CD8-positive, alpha-beta T cell (primary cell): ENCODE measurements at regions of chr10 and their contacts with region 1.

Region 1: GRCh38 chr10:70478191-70479164 is at the start of gene PALD1:
- DNase-seq: peak in 3 of 9 experiments; percentile 30 to 56 (median 45)
- ATAC-seq: peak; percentile 19
- H3K4me3 ChIP-seq: peak within 1 kb of the TSS; percentile 47 to 48
- H3K4me3 Mint-ChIP-seq: peak within 1 kb of the TSS; percentile 80
- H3K27ac ChIP-seq: no peak within 1 kb of the TSS
- H3K27ac Mint-ChIP-seq: no peak within 1 kb of the TSS
- H3K4me1 ChIP-seq: peaks cover 43% of the 10 kb centered on the region
- H3K4me1 Mint-ChIP-seq: peaks cover 45% of the 10 kb centered on the region
- H3K27me3 ChIP-seq: no peaks in the 10 kb centered on the region
- H3K27me3 Mint-ChIP-seq: peaks cover 2% of the 10 kb centered on the region
- CTCF ChIP-seq: no peak
- total RNA-seq, gene PALD1: 0.08 TPM in 1 of 2 experiments, not detected in the other

Region 2: GRCh38 chr10:70233109-70233938 is 245.2 kb before region 1 on chr10 and contains the start of gene PPA1:
- CTCF ChIA-PET with region 1: no interaction called
- POLR2A ChIA-PET with region 1: no interaction called
- intact Hi-C with region 1: loop called (anchors 2 kb)
- DNase-seq: peak; percentile 98 to 100 (median 99)
- ATAC-seq: peak; percentile 93
- H3K4me3 ChIP-seq: peak within 1 kb of the TSS; percentile 87 to 90
- H3K4me3 Mint-ChIP-seq: peak within 1 kb of the TSS; percentile 89
- H3K27ac ChIP-seq: peak within 1 kb of the TSS; percentile 74 to 80
- H3K27ac Mint-ChIP-seq: peak within 1 kb of the TSS; percentile 93
- H3K4me1 ChIP-seq: peaks cover 9% of the 10 kb centered on the region
- H3K4me1 Mint-ChIP-seq: peaks cover 36% of the 10 kb centered on the region
- H3K27me3 ChIP-seq: no peaks in the 10 kb centered on the region
- H3K27me3 Mint-ChIP-seq: peaks cover 4% of the 10 kb centered on the region
- CTCF ChIP-seq: no peak
- total RNA-seq, gene PPA1: 79.9 to 83.1 TPM

Region 3: GRCh38 chr10:70320751-70321150 is 157.7 kb before region 1 on chr10:
- CTCF ChIA-PET with region 1: no interaction called
- POLR2A ChIA-PET with region 1: no interaction called
- intact Hi-C with region 1: no loop called
- DNase-seq: no peak
- ATAC-seq: no peak
- H3K4me3 ChIP-seq: no peak overlapping the region
- H3K4me3 Mint-ChIP-seq: no peak overlapping the region
- H3K27ac ChIP-seq: no peak overlapping the region
- H3K27ac Mint-ChIP-seq: no peak overlapping the region
- H3K4me1 ChIP-seq: peaks cover 39% of the 10 kb centered on the region
- H3K4me1 Mint-ChIP-seq: peaks cover 38% of the 10 kb centered on the region
- H3K27me3 ChIP-seq: no peaks in the 10 kb centered on the region
- H3K27me3 Mint-ChIP-seq: no peaks in the 10 kb centered on the region
- CTCF ChIP-seq: no peak

Region 4: GRCh38 chr10:70381471-70382421 is 96.7 kb before region 1 on chr10:
- CTCF ChIA-PET with region 1: no interaction called
- POLR2A ChIA-PET with region 1: interaction called, 3 read pairs
- intact Hi-C with region 1: loop called in 1 of 2 experiments (anchors 5 kb)
- DNase-seq: peak in 4 of 9 experiments; percentile 20 to 57 (median 30)
- ATAC-seq: peak; percentile 37
- H3K4me3 ChIP-seq: peak overlapping the region; percentile 79 to 86
- H3K4me3 Mint-ChIP-seq: peak overlapping the region; percentile 87
- H3K27ac ChIP-seq: no peak overlapping the region
- H3K27ac Mint-ChIP-seq: no peak overlapping the region
- H3K4me1 ChIP-seq: peaks cover 8% of the 10 kb centered on the region
- H3K4me1 Mint-ChIP-seq: peaks cover 10% of the 10 kb centered on the region
- H3K27me3 ChIP-seq: no peaks in the 10 kb centered on the region
- H3K27me3 Mint-ChIP-seq: peaks cover 2% of the 10 kb centered on the region
- CTCF ChIP-seq: no peak

Region 5: GRCh38 chr10:70461215-70461986 is 17.1 kb before region 1 on chr10:
- CTCF ChIA-PET with region 1: interaction called, 14 read pairs
- POLR2A ChIA-PET with region 1: interaction called, 3 read pairs
- intact Hi-C with region 1: no loop called
- DNase-seq: peak in 8 of 9 experiments; percentile 30 to 67 (median 47)
- ATAC-seq: peak; percentile 70
- H3K4me3 ChIP-seq: no peak overlapping the region
- H3K4me3 Mint-ChIP-seq: no peak overlapping the region
- H3K27ac ChIP-seq: no peak overlapping the region
- H3K27ac Mint-ChIP-seq: no peak overlapping the region
- H3K4me1 ChIP-seq: peaks cover 11% of the 10 kb centered on the region
- H3K4me1 Mint-ChIP-seq: peaks cover 4% of the 10 kb centered on the region
- H3K27me3 ChIP-seq: peaks cover 3 to 15% of the 10 kb centered on the region in 2 experiments
- H3K27me3 Mint-ChIP-seq: peaks cover 37% of the 10 kb centered on the region
- CTCF ChIP-seq: peak; percentile 76

Region 6: GRCh38 chr10:70575874-70576802 is 97.7 kb after region 1 on chr10:
- CTCF ChIA-PET with region 1: no interaction called
- POLR2A ChIA-PET with region 1: no interaction called
- intact Hi-C with region 1: loop called in 1 of 2 experiments (anchors 1 kb)
- DNase-seq: peak in 3 of 9 experiments; percentile 48 to 79 (median 71)
- ATAC-seq: peak; percentile 6
- H3K4me3 ChIP-seq: peak overlapping the region in 1 of 2 experiments; percentile 19
- H3K4me3 Mint-ChIP-seq: peak overlapping the region; percentile 37
- H3K27ac ChIP-seq: peak overlapping the region in 1 of 2 experiments; percentile 54
- H3K27ac Mint-ChIP-seq: peak overlapping the region; percentile 84
- H3K4me1 ChIP-seq: peaks cover 45% of the 10 kb centered on the region
- H3K4me1 Mint-ChIP-seq: peaks cover 46% of the 10 kb centered on the region
- H3K27me3 ChIP-seq: no peaks in the 10 kb centered on the region
- H3K27me3 Mint-ChIP-seq: no peaks in the 10 kb centered on the region
- CTCF ChIP-seq: no peak

Region 7: DNA sequence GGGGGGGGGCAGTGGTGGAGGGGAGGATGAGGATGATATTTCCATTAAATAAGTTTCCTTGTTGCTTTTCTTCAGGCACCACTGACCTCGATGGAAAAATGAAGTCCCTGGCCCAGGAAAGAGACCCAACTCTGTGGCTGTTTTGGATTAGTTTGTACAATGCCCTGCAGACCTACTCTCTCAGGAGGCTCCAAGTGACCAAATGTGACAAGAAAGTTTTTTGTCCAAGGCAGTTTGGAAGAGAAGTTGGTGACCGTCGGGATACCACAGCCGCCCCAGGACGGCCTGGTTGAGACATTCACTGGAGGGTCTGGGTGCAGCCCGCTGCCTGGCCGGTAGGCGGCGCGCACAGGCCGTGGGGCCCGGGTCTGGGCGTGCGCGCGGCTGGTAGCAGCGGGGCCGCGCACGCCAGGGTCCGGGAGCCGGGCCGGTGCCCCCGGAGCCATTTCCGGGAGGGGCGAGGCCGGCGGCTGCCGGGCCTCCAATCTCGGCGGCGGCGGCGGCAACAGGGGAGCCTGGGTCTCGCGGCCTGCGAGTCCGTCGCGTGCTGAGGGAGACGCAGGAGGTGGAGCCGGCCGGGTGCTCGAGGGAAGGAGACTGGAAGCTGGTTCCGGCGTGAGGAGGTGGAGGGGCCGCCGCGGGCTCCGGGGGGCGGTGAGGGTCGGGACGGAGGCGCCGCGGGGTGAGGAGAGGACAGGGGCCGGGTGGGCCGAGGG is 337.2 kb after region 1 on chr10 and contains the start of gene SGPL1:
- CTCF ChIA-PET with region 1: no interaction called
- POLR2A ChIA-PET with region 1: no interaction called
- intact Hi-C with region 1: loop called in 1 of 2 experiments (anchors 5 kb)
- DNase-seq: peak; percentile 70 to 93 (median 85)
- ATAC-seq: peak; percentile 94
- H3K4me3 ChIP-seq: peak within 1 kb of the TSS; percentile 48 to 75
- H3K4me3 Mint-ChIP-seq: peak within 1 kb of the TSS; percentile 93
- H3K27ac ChIP-seq: peak within 1 kb of the TSS; percentile 26 to 65
- H3K27ac Mint-ChIP-seq: peak within 1 kb of the TSS; percentile 94
- H3K4me1 ChIP-seq: peaks cover 19% of the 10 kb centered on the region
- H3K4me1 Mint-ChIP-seq: peaks cover 32% of the 10 kb centered on the region
- H3K27me3 ChIP-seq: no peaks in the 10 kb centered on the region
- H3K27me3 Mint-ChIP-seq: no peaks in the 10 kb centered on the region
- CTCF ChIP-seq: peak; percentile 95
- total RNA-seq, gene SGPL1: 14.5 to 15.5 TPM

Region 8: GRCh38 chr10:70887804-70888800 is 409.6 kb after region 1 on chr10 and contains the start of gene PCBD1:
- CTCF ChIA-PET with region 1: no interaction called
- POLR2A ChIA-PET with region 1: no interaction called
- intact Hi-C with region 1: loop called in 1 of 2 experiments (anchors 5 kb)
- DNase-seq: peak; percentile 36 to 82 (median 75)
- ATAC-seq: peak; percentile 93
- H3K4me3 ChIP-seq: peak within 1 kb of the TSS; percentile 69 to 91
- H3K4me3 Mint-ChIP-seq: peak within 1 kb of the TSS; percentile 89
- H3K27ac ChIP-seq: peak within 1 kb of the TSS; percentile 65 to 92
- H3K27ac Mint-ChIP-seq: peak within 1 kb of the TSS; percentile 91
- H3K4me1 ChIP-seq: peaks cover 16% of the 10 kb centered on the region
- H3K4me1 Mint-ChIP-seq: peaks cover 14% of the 10 kb centered on the region
- H3K27me3 ChIP-seq: no peaks in the 10 kb centered on the region
- H3K27me3 Mint-ChIP-seq: no peaks in the 10 kb centered on the region
- CTCF ChIP-seq: no peak
- total RNA-seq, gene PCBD1: 4.3 to 4.5 TPM